ENCODE measurements at regions of chr7 and their contacts with region 1.

Region 1: GRCh38 chr7:13742811-13743210 is 246.7 kb downstream of the ETV1 start:
- DNase-seq: peak; percentile 25
- ATAC-seq: peak; percentile 86

Region 2: GRCh38 chr7:13104128-13104527 is 638.7 kb before region 1 on chr7:
- intact Hi-C with region 1: no loop called
- DNase-seq: no peak
- ATAC-seq: no peak

Region 3: GRCh38 chr7:13279854-13280435 is 462.9 kb before region 1 on chr7:
- intact Hi-C with region 1: loop called (anchors 10 kb)
- DNase-seq: no peak
- ATAC-seq: no peak

Region 4: DNA sequence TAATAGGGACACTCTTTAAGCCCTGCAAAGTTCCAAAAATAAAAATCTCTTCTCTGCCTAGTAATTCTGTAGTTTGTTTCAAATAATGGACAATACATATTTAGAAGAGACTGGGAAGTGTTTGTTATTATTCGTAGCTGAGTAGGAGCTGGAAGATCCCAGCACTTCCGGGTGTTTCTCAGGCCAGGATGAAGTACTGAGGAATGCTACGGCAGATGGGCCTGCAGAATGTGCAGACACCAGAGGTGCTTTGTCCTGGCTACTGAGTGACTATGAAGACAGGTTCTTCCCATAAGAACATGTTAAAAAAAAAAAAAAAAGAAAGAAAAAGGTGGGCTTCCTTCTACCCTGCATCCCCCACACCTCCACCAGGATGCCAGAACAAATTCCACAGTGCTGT is 210.6 kb after region 1 on chr7:
- intact Hi-C with region 1: loop called (anchors 10 kb)
- DNase-seq: no peak
- ATAC-seq: no peak